ENCODE measurements at regions of chr3 and their contacts with region 1.

Region 1: GRCh38 chr3:151227807-151228665 is 25.0 kb upstream of the GPR171 start:
- DNase-seq: peak; percentile 81 to 94
- H3K4me3 ChIP-seq: no peak overlapping the region
- H3K27ac ChIP-seq: peak overlapping the region in 4 of 5 donors; percentile 13 to 78 (median 57)
- H3K4me1 ChIP-seq: peaks cover 4 to 51% (median 29%) of the 10 kb centered on the region in 4 donors
- H3K27me3 ChIP-seq: no peaks in the 10 kb centered on the region
- CTCF ChIP-seq: peak in 5 of 7 experiments; percentile 76 to 95 (median 90)
- EP300 ChIP-seq: no peak
- POLR2A ChIP-seq: no peak

Region 2: GRCh38 chr3:151282921-151283320 is 54.9 kb after region 1 on chr3:
- intact Hi-C with region 1: loop called (anchors 5 kb)
- DNase-seq: peak in 1 of 2 donors; percentile 87
- H3K4me3 ChIP-seq: no peak overlapping the region
- H3K27ac ChIP-seq: peak overlapping the region in 2 of 5 donors; percentile 52 to 76
- H3K4me1 ChIP-seq: peaks cover 0 to 45% (median 17%) of the 10 kb centered on the region in 4 donors
- H3K27me3 ChIP-seq: no peaks in the 10 kb centered on the region
- CTCF ChIP-seq: peak in 5 of 7 experiments; percentile 20 to 82 (median 68)
- EP300 ChIP-seq: no peak
- POLR2A ChIP-seq: no peak

Region 3: DNA sequence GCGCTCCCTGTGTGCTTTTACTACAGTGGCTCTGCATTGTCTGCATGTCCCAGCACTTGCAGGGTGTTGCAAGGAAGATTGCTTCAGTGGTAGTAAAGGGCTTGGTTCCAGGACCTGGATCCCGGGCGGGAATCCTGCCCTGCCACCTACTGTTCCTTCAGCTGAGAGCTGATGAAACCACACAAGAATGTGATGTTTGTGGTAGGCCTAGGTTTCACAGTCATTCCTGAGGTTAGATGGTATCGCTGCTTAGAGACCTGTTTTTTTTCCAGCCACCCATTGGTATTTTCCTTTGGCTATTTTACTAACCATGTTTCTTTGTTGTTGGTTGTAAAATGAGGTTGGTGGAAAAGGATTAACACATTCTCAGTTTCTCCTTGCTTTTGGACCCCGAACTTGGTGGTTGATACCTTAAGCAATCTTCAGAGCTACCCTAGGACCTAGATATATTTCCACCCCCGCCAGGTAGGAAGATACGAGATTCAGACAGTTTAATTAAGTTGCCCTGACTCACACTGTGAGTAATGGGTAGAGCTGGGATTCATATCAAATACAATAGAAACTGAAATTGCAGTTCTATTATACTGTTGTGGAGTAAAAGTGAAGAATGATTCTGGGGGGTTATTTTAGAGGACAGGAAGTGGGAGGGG is 77.2 kb after region 1 on chr3:
- intact Hi-C with region 1: no loop called
- DNase-seq: peak; percentile 61 to 80
- H3K4me3 ChIP-seq: no peak overlapping the region
- H3K27ac ChIP-seq: peak overlapping the region in 1 of 5 donors; percentile 47
- H3K4me1 ChIP-seq: peaks cover 7 to 15% (median 10%) of the 10 kb centered on the region in 4 donors
- H3K27me3 ChIP-seq: no peaks in the 10 kb centered on the region
- CTCF ChIP-seq: peak in 1 of 7 experiments; percentile 4
- EP300 ChIP-seq: no peak
- POLR2A ChIP-seq: no peak

Region 4: DNA sequence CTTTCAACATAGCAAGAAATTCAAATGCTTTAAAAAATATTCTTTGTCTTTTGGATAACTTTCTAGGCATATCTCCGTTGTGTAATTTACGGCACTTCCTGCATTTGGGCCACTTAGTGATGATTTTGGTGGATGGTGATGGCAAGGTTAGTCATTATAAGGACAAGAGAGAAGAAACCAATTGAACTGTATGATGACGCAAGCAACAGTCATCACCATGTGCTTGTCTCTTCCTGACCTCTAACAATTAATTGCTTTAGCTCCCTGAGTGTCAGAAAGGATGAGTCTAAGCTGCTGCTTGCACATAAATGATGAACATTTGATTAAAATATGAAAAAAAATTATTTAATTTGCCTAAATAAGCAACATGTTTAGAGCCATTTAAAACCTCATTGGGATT is 167.8 kb after region 1 on chr3:
- intact Hi-C with region 1: no loop called
- DNase-seq: no peak
- H3K4me3 ChIP-seq: no peak overlapping the region
- H3K27ac ChIP-seq: no peak overlapping the region
- H3K4me1 ChIP-seq: no peaks in the 10 kb centered on the region
- H3K27me3 ChIP-seq: no peaks in the 10 kb centered on the region
- CTCF ChIP-seq: no peak
- EP300 ChIP-seq: no peak
- POLR2A ChIP-seq: no peak